ENCODE measurements at regions of chr1 and their contacts with region 1.

Region 1: DNA sequence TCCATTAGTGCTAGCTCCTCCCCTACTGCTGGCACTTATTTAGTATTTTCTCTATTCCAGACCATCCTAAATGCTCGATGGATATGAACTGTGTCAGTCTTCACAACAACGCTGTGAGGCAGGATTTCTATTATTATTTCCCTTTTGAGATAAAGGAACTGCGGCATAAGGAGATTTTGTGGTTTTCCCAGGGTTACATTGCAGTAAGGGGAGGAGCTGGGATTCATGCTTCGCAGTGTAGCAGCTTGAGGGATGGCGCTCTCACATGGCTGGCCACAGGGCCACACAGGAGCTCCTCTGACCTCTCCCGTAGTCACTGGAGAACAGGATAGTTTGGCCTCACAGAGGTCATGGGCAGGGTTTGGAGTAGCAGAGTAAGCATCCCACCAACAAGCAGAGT is 116.9 kb downstream of the BEND5 start:
- DNase-seq: no peak
- H3K4me3 ChIP-seq: no peak overlapping the region
- H3K27ac ChIP-seq: no peak overlapping the region
- H3K4me1 ChIP-seq: no peaks in the 10 kb centered on the region
- H3K27me3 ChIP-seq: no peaks in the 10 kb centered on the region
- CTCF ChIP-seq: no peak
- POLR2A ChIP-seq: no peak

Region 2: DNA sequence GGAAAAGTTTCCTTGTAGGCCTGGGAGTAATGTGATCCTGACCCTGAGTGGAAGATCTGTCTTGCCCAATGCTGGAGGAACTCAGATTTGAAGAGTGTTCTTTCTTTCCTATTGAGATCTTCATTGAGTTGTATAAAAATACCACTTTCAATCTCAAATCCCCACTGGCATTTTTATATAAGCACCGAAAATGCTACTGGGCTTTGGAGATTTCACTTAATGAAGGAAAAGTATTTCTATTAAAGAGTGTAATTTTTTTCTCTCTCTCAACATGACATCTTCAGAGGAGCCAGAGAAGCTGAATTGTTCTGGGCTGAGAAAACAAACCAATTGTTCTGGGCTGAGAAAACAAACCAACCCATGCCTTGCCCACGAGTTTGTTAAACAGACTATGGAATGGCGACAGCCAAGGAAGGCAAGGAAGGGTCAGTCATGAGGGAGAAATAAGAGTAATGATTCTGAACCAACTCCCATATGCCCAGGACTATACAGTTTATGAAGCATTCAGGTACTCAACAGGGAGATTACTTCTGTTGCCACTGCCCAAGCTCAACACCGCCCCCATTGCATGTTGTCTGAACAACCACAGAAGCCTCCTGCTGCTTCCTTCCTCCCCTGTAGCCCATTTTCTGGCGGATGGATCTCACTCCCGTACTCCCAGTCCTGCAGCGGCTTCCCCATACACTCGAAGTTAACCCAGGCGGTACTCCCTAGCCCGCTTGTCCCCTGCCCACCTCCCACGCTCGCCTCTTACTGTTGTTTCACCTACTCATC is 13.7 kb after region 1 on chr1:
- intact Hi-C with region 1: loop called (anchors 1 kb)
- DNase-seq: no peak
- H3K4me3 ChIP-seq: no peak overlapping the region
- H3K27ac ChIP-seq: no peak overlapping the region
- H3K4me1 ChIP-seq: no peaks in the 10 kb centered on the region
- H3K27me3 ChIP-seq: no peaks in the 10 kb centered on the region
- CTCF ChIP-seq: no peak
- POLR2A ChIP-seq: no peak